ENCODE measurements at regions of chr15 and their contacts with region 1.

Region 1: DNA sequence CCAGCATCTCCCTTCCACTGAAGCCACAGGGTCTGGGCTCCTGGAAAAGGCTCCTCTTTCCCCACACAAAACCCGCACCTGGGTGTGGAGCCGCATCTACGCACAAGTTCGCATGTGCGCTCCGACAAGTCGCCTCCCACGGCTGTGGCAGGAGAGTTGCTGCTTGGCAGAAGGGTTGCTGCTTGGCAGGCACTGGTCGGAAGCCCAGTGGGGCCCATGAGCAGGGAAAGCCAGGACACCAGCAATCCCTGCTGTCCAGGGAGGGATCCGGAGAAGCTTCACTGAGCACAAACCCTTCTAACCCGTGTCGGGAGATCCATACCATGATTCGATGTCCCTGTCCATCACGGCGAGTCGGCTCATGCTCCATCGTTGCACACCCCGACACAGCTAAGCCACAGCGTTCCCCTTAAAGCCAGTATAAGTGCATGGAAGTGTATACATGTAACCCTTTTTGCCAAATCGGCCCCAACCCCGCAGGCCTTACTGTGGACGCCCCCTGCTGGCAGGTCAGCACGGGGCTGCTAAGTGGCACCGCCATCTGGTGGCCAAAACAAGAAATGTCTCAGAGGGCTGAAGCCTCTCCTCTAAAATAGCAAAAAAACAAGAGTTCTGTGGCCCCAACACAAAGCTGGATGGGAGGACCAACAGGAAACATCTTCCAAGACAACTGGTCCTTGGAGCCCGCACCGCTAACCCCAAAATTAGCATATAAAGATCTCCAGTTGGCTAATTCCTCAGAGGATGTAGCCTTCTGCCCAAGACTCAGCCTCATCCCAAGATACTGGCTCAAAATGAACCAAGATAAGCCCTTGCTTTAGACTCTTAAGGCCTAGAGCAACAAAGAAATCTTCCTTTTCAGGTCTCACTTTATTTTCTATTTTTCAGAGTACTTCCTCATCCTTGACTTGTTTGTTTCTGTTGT is 8.3 kb downstream of the ANKRD63 start:
- DNase-seq: peak; percentile 78 to 94 (median 86)
- ATAC-seq: peak; percentile 89
- H3K4me3 ChIP-seq: no peak overlapping the region
- H3K4me3 Mint-ChIP-seq: no peak overlapping the region
- H3K27ac ChIP-seq: no peak overlapping the region
- H3K27ac Mint-ChIP-seq: no peak overlapping the region
- H3K4me1 ChIP-seq: peaks cover 12% of the 10 kb centered on the region
- H3K4me1 Mint-ChIP-seq: peaks cover 12% of the 10 kb centered on the region
- H3K27me3 ChIP-seq: peaks cover 18 to 19% of the 10 kb centered on the region in 2 experiments
- H3K27me3 Mint-ChIP-seq: peaks cover 23% of the 10 kb centered on the region
- CTCF ChIP-seq: peak; percentile 100

Region 2: DNA sequence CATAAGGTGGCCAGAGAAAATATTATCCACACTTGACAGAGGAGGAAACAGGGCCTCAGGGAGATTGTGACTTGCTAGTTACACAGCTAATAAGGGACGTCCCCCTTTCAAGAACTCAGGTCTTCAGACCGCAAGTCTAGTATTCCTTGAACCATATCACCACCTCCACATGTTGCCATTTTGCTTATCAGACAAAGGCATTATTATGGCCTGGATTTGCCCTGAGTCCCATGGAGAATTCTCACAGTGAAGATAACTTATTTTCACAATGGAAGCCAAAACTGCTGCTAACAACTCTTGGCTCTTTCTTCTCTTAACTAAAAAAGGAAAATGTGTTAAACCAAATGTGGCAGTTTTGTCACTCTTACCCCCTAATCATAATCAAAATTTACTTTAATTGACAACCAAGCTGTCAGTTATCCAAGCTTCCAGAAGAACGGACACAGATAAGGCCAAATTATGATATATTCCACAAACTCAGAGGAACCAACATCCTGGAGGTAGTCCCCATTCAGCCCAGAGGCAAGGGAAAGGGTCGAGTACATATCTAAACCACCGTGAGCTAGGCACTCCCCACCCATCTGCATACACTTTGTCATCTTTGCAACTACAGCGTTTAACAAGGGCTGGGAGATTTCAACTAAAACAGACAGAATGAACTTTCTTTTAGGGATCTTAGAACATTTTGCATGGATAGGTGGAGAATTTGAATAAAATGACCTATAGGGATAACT is 757.3 kb before region 1 on chr15:
- CTCF ChIA-PET with region 1: no interaction called
- POLR2A ChIA-PET with region 1: no interaction called
- intact Hi-C with region 1: no loop called
- DNase-seq: no peak
- ATAC-seq: no peak
- H3K4me3 ChIP-seq: no peak overlapping the region
- H3K4me3 Mint-ChIP-seq: no peak overlapping the region
- H3K27ac ChIP-seq: no peak overlapping the region
- H3K27ac Mint-ChIP-seq: no peak overlapping the region
- H3K4me1 ChIP-seq: no peaks in the 10 kb centered on the region
- H3K4me1 Mint-ChIP-seq: no peaks in the 10 kb centered on the region
- H3K27me3 ChIP-seq: peaks cover 10 to 29% of the 10 kb centered on the region in 2 experiments
- H3K27me3 Mint-ChIP-seq: peaks cover 51% of the 10 kb centered on the region
- CTCF ChIP-seq: no peak

Region 3: DNA sequence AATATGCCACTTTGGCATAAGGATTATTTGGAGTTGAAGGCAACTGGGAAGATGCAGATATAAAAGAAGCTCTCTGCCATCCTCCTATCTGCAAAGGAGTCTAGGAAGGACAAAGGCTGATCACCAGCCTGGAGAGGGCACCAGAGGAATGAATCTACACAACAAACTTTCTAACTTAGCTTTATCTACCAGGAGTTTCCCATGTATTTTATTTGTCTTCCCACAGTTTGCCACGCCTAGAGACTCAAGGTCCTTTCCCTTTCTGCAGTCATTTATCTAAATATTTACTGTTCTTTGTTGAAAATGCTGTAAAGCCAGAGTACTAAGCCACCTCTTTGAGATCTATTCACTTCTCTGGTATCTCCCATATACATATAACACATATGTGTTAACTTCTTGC is 386.8 kb before region 1 on chr15:
- CTCF ChIA-PET with region 1: no interaction called
- POLR2A ChIA-PET with region 1: no interaction called
- intact Hi-C with region 1: loop called in 1 of 2 experiments (anchors 5 kb)
- DNase-seq: peak in 4 of 14 experiments; percentile 5 to 16 (median 11)
- ATAC-seq: no peak
- H3K4me3 ChIP-seq: no peak overlapping the region
- H3K4me3 Mint-ChIP-seq: no peak overlapping the region
- H3K27ac ChIP-seq: no peak overlapping the region
- H3K27ac Mint-ChIP-seq: no peak overlapping the region
- H3K4me1 ChIP-seq: no peaks in the 10 kb centered on the region
- H3K4me1 Mint-ChIP-seq: no peaks in the 10 kb centered on the region
- H3K27me3 ChIP-seq: peaks cover 0 to 10% of the 10 kb centered on the region in 2 experiments
- H3K27me3 Mint-ChIP-seq: peaks cover 11% of the 10 kb centered on the region
- CTCF ChIP-seq: no peak

Region 4: GRCh38 chr15:40044717-40045571 is 229.7 kb before region 1 on chr15:
- CTCF ChIA-PET with region 1: interaction called, 46 read pairs
- POLR2A ChIA-PET with region 1: interaction called, 11 read pairs
- intact Hi-C with region 1: loop called (anchors 1 kb)
- DNase-seq: peak; percentile 66 to 91 (median 78)
- ATAC-seq: peak; percentile 82
- H3K4me3 ChIP-seq: no peak overlapping the region
- H3K4me3 Mint-ChIP-seq: peak overlapping the region; percentile 39
- H3K27ac ChIP-seq: no peak overlapping the region
- H3K27ac Mint-ChIP-seq: peak overlapping the region; percentile 70
- H3K4me1 ChIP-seq: peaks cover 56% of the 10 kb centered on the region
- H3K4me1 Mint-ChIP-seq: peaks cover 68% of the 10 kb centered on the region
- H3K27me3 ChIP-seq: no peaks in the 10 kb centered on the region
- H3K27me3 Mint-ChIP-seq: no peaks in the 10 kb centered on the region
- CTCF ChIP-seq: peak; percentile 95

Region 5: DNA sequence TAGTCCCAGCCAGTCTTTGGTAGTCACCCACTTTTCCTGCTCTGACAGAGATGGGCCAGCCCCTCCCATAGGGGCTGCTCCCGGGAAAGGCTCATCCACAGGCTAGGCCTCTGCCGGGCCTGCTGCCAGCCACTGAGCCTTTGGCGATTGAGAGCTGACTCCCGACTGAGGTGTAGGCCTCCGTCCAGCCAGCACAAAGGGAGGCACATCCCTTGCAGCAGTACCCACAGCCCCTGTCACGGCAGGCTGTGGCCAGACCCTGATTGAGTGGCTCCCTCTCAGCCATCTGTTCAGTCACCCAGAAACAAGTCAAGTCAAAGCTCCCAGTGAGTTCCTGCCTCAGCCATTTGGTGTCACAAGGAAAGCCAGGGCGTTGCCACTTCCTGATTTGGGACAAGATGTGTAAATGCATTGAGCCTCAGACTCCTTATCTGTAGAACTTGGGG is 42.0 kb before region 1 on chr15:
- CTCF ChIA-PET with region 1: no interaction called
- POLR2A ChIA-PET with region 1: no interaction called
- intact Hi-C with region 1: no loop called
- DNase-seq: no peak
- ATAC-seq: no peak
- H3K4me3 ChIP-seq: no peak overlapping the region
- H3K4me3 Mint-ChIP-seq: no peak overlapping the region
- H3K27ac ChIP-seq: no peak overlapping the region
- H3K27ac Mint-ChIP-seq: no peak overlapping the region
- H3K4me1 ChIP-seq: no peaks in the 10 kb centered on the region
- H3K4me1 Mint-ChIP-seq: no peaks in the 10 kb centered on the region
- H3K27me3 ChIP-seq: no peaks in the 10 kb centered on the region
- H3K27me3 Mint-ChIP-seq: peaks cover under 1% of the 10 kb centered on the region
- CTCF ChIP-seq: no peak

Region 6: DNA sequence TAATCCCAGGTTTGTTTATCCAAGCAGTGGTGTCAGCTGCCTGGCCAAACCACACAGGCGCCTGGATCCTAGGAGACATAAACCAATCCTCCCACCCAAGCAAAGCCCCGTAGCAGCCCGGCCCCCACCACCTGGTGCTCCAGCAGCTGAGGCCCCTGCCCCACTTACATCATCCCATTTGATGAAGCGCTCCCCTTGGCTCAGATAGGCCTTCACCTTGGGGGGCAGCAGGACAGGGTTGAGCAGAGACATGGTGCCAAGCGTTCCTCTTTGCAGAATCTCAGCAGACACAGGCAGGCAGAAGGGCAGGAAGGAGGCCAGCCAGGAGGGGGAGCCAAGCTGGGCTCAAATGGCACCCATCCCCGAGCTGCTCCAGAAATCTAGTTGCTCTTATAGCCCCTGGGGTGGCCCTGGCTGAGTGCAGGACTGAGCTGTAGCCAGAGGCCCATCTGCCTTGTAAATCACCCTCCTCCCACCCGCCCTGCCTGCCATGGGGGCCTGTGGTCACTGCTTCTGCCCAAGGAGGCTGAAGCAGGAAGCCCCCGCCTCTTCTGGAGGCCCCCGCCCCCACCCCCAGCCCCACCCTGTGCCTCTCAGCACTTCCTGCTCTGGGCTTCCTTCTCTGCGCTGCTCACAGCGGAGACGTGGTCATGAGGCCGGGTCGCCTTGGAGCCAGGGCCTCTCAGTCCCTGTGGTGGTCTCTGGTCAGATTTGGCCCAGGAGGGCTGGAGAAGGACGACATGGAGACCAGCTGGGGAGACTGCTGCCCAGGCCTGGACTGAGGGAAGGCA is 33.0 kb after region 1 on chr15 and contains the start of gene PLCB2:
- CTCF ChIA-PET with region 1: interaction called, 45 read pairs
- POLR2A ChIA-PET with region 1: interaction called, 34 read pairs
- intact Hi-C with region 1: loop called (anchors 1 kb)
- DNase-seq: peak; percentile 49 to 87 (median 68)
- ATAC-seq: peak; percentile 82
- H3K4me3 ChIP-seq: peak within 1 kb of the TSS; percentile 98
- H3K4me3 Mint-ChIP-seq: peak within 1 kb of the TSS; percentile 96
- H3K27ac ChIP-seq: peak within 1 kb of the TSS; percentile 74 to 79
- H3K27ac Mint-ChIP-seq: peak within 1 kb of the TSS; percentile 95
- H3K4me1 ChIP-seq: peaks cover 49% of the 10 kb centered on the region
- H3K4me1 Mint-ChIP-seq: peaks cover 52% of the 10 kb centered on the region
- H3K27me3 ChIP-seq: no peaks in the 10 kb centered on the region
- H3K27me3 Mint-ChIP-seq: no peaks in the 10 kb centered on the region
- CTCF ChIP-seq: peak; percentile 44
- total RNA-seq, gene PLCB2: 206 to 222 TPM

Region 7: DNA sequence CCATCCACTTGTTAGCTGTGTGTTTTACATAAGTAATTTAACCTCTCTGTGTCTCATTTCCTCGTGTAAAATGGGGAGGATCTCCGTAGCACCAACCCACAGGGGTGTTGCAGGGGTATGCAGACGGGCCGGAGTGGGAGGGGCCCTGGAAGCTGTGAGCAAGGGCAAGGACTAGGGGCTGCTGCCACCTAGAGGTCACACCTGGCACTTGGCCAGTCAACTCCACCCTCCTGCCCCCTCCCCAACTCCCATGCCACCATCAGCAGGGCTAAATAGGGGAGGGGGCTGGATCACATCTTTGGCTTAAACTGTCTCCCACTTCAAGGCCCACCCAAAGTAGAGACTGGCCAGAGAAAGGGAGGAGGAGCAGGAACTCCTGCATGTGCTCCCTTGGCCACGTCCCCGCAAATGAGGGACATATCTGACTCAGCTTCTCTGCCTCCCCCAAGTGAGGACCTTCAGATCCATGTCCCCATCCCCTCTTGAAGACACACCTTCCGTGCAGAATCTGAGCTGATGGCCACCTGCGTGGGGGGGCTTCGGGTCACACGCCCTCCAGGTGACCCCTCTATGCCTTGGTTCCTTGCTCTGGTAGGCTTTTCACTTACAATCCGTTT is 63.5 kb after region 1 on chr15:
- CTCF ChIA-PET with region 1: interaction called, 43 read pairs
- POLR2A ChIA-PET with region 1: interaction called, 6 read pairs
- intact Hi-C with region 1: loop called (anchors 1 kb)
- DNase-seq: peak; percentile 64 to 89 (median 73)
- ATAC-seq: peak; percentile 81
- H3K4me3 ChIP-seq: no peak overlapping the region
- H3K4me3 Mint-ChIP-seq: no peak overlapping the region
- H3K27ac ChIP-seq: no peak overlapping the region
- H3K27ac Mint-ChIP-seq: no peak overlapping the region
- H3K4me1 ChIP-seq: peaks cover 31% of the 10 kb centered on the region
- H3K4me1 Mint-ChIP-seq: peaks cover 21% of the 10 kb centered on the region
- H3K27me3 ChIP-seq: no peaks in the 10 kb centered on the region
- H3K27me3 Mint-ChIP-seq: no peaks in the 10 kb centered on the region
- CTCF ChIP-seq: peak; percentile 90

Region 8: DNA sequence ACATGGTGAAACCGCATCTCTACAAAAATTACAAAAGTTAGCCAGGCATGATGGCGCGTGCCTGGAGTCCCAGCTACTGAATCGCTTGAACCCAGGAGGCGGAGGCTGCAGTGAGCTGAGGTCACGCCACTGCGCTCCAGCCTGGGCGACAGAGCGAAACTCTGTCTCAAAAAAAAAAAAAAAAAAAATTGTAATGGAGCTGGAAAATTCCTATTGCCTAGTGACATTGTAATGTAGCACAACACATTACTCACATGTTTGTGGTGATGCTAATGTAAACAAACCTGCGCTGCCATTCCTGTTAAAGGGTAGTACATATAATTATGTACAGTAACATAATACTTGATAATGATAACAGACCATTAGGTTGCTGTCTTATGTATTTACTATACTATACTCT is 358.5 kb after region 1 on chr15:
- CTCF ChIA-PET with region 1: no interaction called
- POLR2A ChIA-PET with region 1: no interaction called
- intact Hi-C with region 1: no loop called
- DNase-seq: no peak
- ATAC-seq: no peak
- H3K4me3 ChIP-seq: no peak overlapping the region
- H3K4me3 Mint-ChIP-seq: no peak overlapping the region
- H3K27ac ChIP-seq: no peak overlapping the region
- H3K27ac Mint-ChIP-seq: no peak overlapping the region
- H3K4me1 ChIP-seq: no peaks in the 10 kb centered on the region
- H3K4me1 Mint-ChIP-seq: no peaks in the 10 kb centered on the region
- H3K27me3 ChIP-seq: no peaks in the 10 kb centered on the region
- H3K27me3 Mint-ChIP-seq: no peaks in the 10 kb centered on the region
- CTCF ChIP-seq: no peak